CD8-positive, alpha-beta memory T cell (primary cell): ENCODE measurements at regions of chr19 and their contacts with region 1.

Region 1: DNA sequence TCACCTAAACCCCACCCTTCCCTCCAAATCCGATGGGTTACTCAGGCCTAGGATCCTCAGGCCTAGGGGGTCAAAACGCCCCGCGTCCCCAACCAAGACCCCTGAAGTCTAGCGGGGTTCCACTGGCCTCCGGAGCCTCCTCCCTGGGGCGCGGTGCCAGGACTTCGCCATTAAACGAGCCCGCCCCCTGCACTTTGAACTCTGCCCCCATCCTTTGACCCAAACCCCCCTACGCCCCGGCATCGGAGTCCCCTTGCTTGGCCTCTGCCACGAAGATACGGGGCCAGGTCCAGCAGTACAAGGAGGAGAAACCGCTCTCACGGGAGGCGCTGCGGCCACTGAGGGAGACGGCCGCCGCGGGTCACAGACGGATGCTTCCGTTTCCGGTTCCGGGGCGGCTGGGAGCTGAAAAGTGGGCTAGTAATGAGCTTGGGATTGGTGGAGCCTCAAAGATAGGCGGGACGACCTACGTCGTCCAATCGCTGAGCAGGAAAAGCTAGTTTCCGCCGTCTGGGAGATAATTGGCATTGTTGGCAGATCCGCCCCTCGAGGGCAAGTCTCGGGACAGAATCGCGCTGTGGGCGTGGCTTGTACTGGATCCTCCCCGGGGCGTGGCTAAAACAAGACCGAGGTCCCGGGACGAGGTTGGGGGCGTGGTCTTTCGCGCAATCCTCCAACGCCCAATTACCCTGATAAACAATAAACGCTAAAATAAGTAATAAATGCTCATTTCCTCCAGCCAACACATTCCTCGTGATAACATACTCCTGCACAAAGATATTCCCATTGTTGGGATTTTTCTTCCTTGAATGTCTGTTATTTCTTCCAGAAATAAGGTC is 5.7 kb upstream of the ZNF77 start:
- DNase-seq: peak; percentile 100
- H3K4me3 ChIP-seq: peak overlapping the region; percentile 83
- H3K4me3 Mint-ChIP-seq: peak overlapping the region; percentile 91 to 99 (median 97)
- H3K27ac ChIP-seq: peak overlapping the region; percentile 92
- H3K27ac Mint-ChIP-seq: peak overlapping the region; percentile 88 to 100 (median 99)
- H3K4me1 ChIP-seq: peaks cover 12% of the 10 kb centered on the region
- H3K4me1 Mint-ChIP-seq: peaks cover 30 to 39% (median 31%) of the 10 kb centered on the region in 3 donors
- H3K27me3 ChIP-seq: no peaks in the 10 kb centered on the region
- H3K27me3 Mint-ChIP-seq: peaks cover 0 to 3% of the 10 kb centered on the region in 2 donors

Region 2: DNA sequence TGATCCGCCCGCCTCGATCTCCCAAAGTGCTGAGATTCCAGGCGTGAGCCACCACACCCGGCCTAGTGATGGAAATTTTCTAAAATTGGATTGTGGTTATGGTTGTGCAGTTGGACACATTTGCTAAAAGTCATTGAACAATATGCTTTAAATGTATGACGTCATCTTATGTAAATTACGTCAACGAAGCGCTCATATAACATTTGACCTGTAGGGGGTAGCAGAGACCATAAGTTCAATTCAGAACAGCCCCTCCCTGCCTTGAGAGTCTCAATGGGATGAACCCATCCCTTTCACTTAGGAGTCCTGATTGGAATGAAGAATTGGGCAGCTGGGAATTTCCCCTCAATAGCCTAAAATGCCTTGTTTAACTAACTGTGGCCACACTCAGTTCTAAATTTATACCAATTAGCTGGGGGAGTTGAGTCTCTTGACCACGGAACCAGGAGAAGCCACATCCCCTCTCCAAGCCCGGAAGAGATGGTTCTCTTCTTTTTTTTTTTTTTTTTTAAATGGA is 11.6 kb after region 1 on chr19:
- CTCF ChIA-PET with region 1: interaction called, 32 read pairs
- POLR2A ChIA-PET with region 1: interaction called, 3 read pairs
- DNase-seq: peak in 4 of 5 donors; percentile 49 to 80 (median 64)
- H3K4me3 ChIP-seq: no peak overlapping the region
- H3K4me3 Mint-ChIP-seq: peak overlapping the region in 2 of 7 donors; percentile 0 to 33
- H3K27ac ChIP-seq: no peak overlapping the region
- H3K27ac Mint-ChIP-seq: peak overlapping the region in 7 of 8 donors; percentile 13 to 91 (median 66)
- H3K4me1 ChIP-seq: peaks cover 4% of the 10 kb centered on the region
- H3K4me1 Mint-ChIP-seq: peaks cover 5 to 6% (median 5%) of the 10 kb centered on the region in 3 donors
- H3K27me3 ChIP-seq: no peaks in the 10 kb centered on the region
- H3K27me3 Mint-ChIP-seq: peaks cover 1 to 5% of the 10 kb centered on the region in 2 donors

Region 3: DNA sequence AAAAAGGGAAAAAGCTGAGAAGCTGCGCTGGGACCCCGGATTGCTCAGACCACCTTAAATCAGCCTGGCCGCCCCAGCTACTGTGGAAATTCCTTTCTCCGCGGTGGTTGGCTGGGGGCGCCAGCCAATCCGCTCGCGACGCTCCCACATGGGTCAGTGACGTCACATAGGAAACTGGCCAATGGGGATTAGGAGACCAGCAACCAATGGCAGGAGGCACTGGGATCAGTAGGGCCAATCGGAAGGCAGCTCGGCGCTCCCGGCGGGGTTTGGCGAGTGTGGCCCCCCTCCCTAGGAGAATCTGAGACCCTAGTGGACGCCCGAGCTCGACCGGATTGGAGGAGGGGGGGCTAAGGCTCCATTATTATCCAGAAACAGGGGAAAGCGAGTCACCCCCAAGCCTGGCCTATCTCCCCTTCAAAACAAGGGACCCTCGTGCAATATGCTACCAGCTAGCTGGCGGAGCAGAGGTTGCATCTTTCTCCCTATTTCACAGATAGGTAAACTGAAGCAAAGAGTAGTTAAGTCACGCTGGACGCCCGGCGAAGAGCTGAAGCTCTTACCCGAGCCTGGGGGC is 85.1 kb after region 1 on chr19:
- CTCF ChIA-PET with region 1: interaction called, 9 read pairs
- POLR2A ChIA-PET with region 1: interaction called, 13 read pairs
- DNase-seq: peak; percentile 86 to 97 (median 95)
- H3K4me3 ChIP-seq: peak overlapping the region; percentile 99
- H3K4me3 Mint-ChIP-seq: peak overlapping the region; percentile 87 to 98 (median 93)
- H3K27ac ChIP-seq: peak overlapping the region; percentile 82
- H3K27ac Mint-ChIP-seq: peak overlapping the region; percentile 89 to 100 (median 97)
- H3K4me1 ChIP-seq: peaks cover 16% of the 10 kb centered on the region
- H3K4me1 Mint-ChIP-seq: peaks cover 20 to 37% (median 23%) of the 10 kb centered on the region in 3 donors
- H3K27me3 ChIP-seq: no peaks in the 10 kb centered on the region
- H3K27me3 Mint-ChIP-seq: peaks cover 0 to 8% of the 10 kb centered on the region in 2 donors

Region 4: GRCh38 chr19:3075895-3076431 is 125.5 kb after region 1 on chr19:
- CTCF ChIA-PET with region 1: interaction called, 13 read pairs
- POLR2A ChIA-PET with region 1: no interaction called
- DNase-seq: peak; percentile 56 to 81 (median 71)
- H3K4me3 ChIP-seq: no peak overlapping the region
- H3K4me3 Mint-ChIP-seq: no peak overlapping the region
- H3K27ac ChIP-seq: no peak overlapping the region
- H3K27ac Mint-ChIP-seq: no peak overlapping the region
- H3K4me1 ChIP-seq: peaks cover 5% of the 10 kb centered on the region
- H3K4me1 Mint-ChIP-seq: peaks cover 0 to 7% (median 3%) of the 10 kb centered on the region in 3 donors
- H3K27me3 ChIP-seq: no peaks in the 10 kb centered on the region
- H3K27me3 Mint-ChIP-seq: peaks cover 0 to 2% of the 10 kb centered on the region in 2 donors

Region 5: DNA sequence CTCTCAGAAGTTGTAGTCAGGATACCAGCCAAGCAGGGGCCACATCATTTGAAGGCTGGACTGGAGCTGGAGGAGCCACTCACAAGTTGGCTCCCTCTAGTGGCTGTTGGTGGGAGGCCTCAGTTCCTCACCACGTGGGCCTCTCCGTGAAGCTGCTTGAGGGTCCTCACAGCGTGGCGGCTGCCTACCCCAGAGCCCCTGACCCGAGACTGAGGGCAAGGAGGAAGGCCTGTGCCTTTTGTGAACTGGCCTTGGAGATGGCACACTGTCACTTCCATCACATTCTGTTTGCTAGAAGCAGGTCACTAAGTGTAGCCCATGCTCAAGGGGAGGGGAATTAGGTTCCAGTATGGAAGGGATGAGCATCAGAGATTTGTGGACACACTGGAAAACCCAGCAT is 158.3 kb after region 1 on chr19:
- CTCF ChIA-PET with region 1: interaction called, 74 read pairs
- POLR2A ChIA-PET with region 1: interaction called, 11 read pairs
- DNase-seq: peak; percentile 47 to 78 (median 58)
- H3K4me3 ChIP-seq: no peak overlapping the region
- H3K4me3 Mint-ChIP-seq: peak overlapping the region in 1 of 7 donors; percentile 70
- H3K27ac ChIP-seq: no peak overlapping the region
- H3K27ac Mint-ChIP-seq: peak overlapping the region in 1 of 8 donors; percentile 82
- H3K4me1 ChIP-seq: peaks cover 6% of the 10 kb centered on the region
- H3K4me1 Mint-ChIP-seq: peaks cover 8 to 10% (median 9%) of the 10 kb centered on the region in 3 donors
- H3K27me3 ChIP-seq: no peaks in the 10 kb centered on the region
- H3K27me3 Mint-ChIP-seq: peaks cover 4 to 6% of the 10 kb centered on the region in 2 donors